Mammary epithelial cell (primary cell): ENCODE measurements at regions of chr12 and their contacts with region 1.

Region 1: DNA sequence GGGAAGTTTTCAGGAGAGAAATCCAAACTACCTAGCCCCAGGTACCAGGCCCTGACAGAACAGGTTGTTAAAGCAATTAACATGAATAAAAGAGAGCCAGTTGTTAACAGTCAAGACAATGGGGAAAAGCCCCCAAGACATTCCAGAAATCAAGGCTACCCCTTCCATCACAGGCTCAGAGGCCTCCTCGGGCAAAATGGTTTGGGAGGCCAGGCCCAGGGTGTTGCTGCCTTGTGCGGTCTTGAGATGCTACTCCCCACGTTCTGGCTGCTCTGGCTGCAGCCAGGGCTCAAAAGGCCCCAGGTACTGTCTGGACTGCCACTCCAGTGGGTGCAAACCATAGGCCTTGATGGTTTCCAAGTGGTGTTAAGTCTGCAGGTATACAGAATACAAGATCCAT is 7.0 kb downstream of the CRY1 start:
- DNase-seq: no peak
- H3K4me3 ChIP-seq: no peak overlapping the region
- H3K27ac ChIP-seq: no peak overlapping the region
- H3K4me1 ChIP-seq: peaks cover 7% of the 10 kb centered on the region
- H3K27me3 ChIP-seq: no peaks in the 10 kb centered on the region
- CTCF ChIP-seq: no peak

Region 2: DNA sequence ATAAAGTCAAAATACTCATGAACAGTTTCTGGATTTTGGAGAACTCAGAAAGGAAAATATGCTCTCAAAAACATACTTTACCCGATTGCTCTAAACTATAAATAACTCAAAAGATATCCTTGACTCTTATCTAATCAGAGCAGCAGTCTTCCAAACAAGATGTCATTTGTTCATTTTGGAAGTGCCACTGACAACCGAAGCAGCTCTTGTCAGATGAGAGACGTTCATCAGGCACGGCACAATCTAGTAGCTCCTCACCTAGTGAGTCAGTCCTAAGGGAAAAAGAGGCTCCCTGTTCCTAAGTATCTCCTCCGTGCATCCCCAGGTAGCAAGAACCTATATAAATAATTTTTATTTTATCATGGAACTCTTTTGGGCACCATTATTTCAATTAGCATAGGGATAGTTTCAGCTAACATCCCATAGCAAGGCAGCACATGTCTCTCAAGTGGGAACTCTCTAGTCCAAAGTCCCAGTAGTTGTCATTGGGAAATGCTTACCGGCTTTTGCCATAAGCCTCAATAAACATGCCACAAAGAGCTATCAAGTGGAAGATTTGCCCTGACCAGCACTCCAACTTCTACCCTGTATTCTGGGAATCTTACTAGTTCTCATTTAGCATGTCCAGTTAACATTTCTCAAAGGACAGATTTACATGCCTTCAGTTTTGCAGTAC is 144.7 kb before region 1 on chr12:
- CTCF ChIA-PET with region 1: no interaction called
- dilution Hi-C with region 1: no loop called
- in situ Hi-C with region 1: no loop called
- intact Hi-C with region 1: no loop called
- DNase-seq: no peak
- H3K4me3 ChIP-seq: no peak overlapping the region
- H3K27ac ChIP-seq: no peak overlapping the region
- H3K4me1 ChIP-seq: no peaks in the 10 kb centered on the region
- H3K27me3 ChIP-seq: peaks cover 2% of the 10 kb centered on the region
- CTCF ChIP-seq: no peak

Region 3: GRCh38 chr12:107027636-107028053 is 58.7 kb before region 1 on chr12:
- CTCF ChIA-PET with region 1: no interaction called
- dilution Hi-C with region 1: no loop called
- in situ Hi-C with region 1: no loop called
- intact Hi-C with region 1: no loop called
- DNase-seq: peak; percentile 91
- H3K4me3 ChIP-seq: no peak overlapping the region
- H3K27ac ChIP-seq: peak overlapping the region; percentile 81
- H3K4me1 ChIP-seq: peaks cover 14% of the 10 kb centered on the region
- H3K27me3 ChIP-seq: no peaks in the 10 kb centered on the region
- CTCF ChIP-seq: no peak

Region 4: GRCh38 chr12:107042801-107043200 is 43.5 kb before region 1 on chr12:
- CTCF ChIA-PET with region 1: no interaction called
- dilution Hi-C with region 1: loop called (anchors 5 kb)
- in situ Hi-C with region 1: no loop called
- intact Hi-C with region 1: no loop called
- DNase-seq: no peak
- H3K4me3 ChIP-seq: no peak overlapping the region
- H3K27ac ChIP-seq: no peak overlapping the region
- H3K4me1 ChIP-seq: no peaks in the 10 kb centered on the region
- H3K27me3 ChIP-seq: no peaks in the 10 kb centered on the region
- CTCF ChIP-seq: no peak

Region 5: GRCh38 chr12:107180272-107180671 is 94.0 kb after region 1 on chr12:
- CTCF ChIA-PET with region 1: no interaction called
- dilution Hi-C with region 1: no loop called
- in situ Hi-C with region 1: no loop called
- intact Hi-C with region 1: no loop called
- DNase-seq: no peak
- H3K4me3 ChIP-seq: no peak overlapping the region
- H3K27ac ChIP-seq: no peak overlapping the region
- H3K4me1 ChIP-seq: no peaks in the 10 kb centered on the region
- H3K27me3 ChIP-seq: peaks cover 3% of the 10 kb centered on the region
- CTCF ChIP-seq: no peak

Region 6: DNA sequence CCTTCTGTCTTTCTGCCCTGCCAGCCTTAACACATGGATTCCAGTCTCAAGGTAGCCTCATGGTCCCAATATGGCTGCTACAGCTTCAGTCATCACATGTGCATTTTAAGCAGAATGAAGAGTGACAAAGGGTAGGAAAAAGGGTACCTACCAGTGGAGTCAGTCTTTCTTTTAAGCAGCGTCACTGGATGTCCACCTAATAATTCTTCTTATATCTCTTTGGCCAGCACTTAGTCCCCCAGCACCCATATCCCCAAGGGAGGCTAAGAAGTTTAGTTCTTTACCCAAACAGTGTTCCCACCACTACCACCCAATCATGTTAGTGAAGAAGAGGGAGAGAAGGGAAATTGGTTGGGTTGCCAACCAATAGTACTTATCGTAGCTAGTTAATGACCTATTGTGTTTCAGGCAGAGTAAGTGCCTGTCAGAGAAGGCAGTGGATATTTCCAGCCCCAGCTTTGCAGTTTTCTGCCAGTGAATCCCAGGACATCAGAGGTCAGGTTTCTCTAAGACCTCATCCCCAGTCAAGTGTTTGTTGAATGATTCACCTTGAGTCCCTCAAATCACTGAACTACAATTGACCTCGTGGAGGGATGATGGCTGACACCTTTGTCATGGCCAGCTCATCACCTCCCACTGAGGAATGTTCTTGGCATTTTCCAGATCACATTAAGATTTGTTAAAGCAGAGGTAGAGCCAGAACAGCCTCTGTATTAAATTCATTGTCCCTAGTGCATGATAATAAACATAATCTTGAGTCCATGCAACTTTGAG is 257.9 kb after region 1 on chr12:
- CTCF ChIA-PET with region 1: no interaction called
- dilution Hi-C with region 1: no loop called
- in situ Hi-C with region 1: no loop called
- intact Hi-C with region 1: no loop called
- DNase-seq: peak; percentile 91
- H3K4me3 ChIP-seq: no peak overlapping the region
- H3K27ac ChIP-seq: peak overlapping the region; percentile 54
- H3K4me1 ChIP-seq: peaks cover 32% of the 10 kb centered on the region
- H3K27me3 ChIP-seq: no peaks in the 10 kb centered on the region
- CTCF ChIP-seq: no peak